ENCODE measurements at regions of chr20 and their contacts with region 1.

Region 1: DNA sequence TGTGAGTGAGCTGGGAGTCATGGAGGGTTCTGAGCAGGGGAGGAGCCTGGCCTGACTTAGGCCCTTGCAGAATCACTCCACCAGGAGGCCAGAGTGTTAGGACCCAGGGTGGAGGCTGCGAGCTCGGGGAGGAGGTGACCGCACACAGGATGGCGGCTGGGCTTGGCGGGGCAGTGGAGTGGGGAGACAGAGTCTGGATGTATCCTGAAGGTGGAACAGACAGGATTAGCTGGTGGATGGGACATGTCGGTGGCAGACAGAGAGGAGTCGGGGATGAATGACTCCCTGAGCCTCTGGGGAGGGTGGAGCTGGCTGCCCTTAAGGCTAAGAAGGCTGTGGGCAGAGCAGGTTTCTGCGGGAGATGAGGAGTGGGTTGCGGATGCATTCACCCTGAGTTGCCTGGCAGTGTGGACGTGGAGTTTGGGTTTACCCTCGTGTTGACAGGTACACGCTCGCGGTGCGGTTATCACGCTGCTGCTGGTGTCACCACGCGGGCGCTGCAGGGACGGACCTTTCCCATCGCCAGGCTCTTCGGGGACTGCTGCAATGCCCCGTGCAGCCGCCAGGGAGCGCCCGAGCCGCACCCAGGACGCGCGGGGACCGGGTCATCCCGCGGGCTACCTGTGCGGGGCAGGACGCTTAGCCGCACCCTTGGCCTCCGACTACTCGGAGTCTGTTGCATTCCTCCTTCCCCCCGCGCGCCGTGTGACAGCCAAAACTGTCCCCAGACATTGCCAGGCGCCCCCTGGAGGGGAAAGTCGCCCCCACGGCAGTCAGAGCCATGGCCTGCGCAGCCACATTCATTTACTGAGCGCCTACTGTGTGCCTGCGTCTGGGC is 43.0 kb upstream of the PTGIS start:
- DNase-seq: peak; percentile 55 to 96 (median 81)

Region 2: GRCh38 chr20:49541733-49542513 is 69.0 kb before region 1 on chr20:
- intact Hi-C with region 1: loop called (anchors 2 kb)
- DNase-seq: peak in 9 of 10 donors; percentile 23 to 92 (median 55)

Region 3: DNA sequence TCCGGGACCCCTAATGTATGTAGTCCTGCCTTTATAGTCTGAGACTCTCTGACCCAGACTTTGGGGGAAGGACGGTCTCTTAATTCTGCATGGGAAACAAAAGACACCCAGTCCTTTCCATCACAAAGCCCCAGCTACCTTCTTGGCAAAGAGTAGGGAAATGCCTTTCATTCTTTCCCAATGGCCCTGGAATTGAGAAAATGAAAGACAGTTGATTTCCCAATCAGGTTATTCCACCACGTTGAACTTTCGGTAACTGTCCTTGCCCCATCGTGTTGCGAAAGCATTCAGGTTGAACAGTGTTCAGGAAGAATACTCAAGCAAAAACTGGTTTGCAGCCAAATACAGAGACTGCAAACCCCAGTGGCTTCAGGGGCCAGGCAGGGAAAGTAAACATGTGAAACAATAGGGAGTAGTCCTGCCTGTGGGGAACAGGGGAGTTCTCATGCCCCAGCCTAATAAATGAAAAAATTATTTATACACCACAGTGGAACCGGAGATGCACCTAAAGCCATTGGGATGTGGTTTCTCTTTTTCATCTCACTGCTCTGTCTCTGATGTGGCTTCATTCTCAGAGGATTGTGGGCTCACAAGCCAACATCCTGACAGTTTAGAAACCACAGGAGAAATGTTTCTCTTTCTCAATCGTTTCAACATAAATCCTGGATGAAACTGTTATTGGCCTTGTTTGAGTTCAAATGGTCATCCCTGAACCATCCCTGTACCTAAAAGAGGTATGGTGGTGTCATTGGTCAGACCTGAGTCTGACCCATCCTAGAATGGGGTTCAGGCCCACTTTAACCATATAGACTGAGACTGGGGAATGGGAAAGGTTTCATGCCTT is 157.5 kb after region 1 on chr20:
- intact Hi-C with region 1: loop called (anchors 1 kb)
- DNase-seq: no peak

Region 4: GRCh38 chr20:49888345-49888966 is 277.5 kb after region 1 on chr20:
- intact Hi-C with region 1: loop called (anchors 1 kb)
- DNase-seq: peak; percentile 66 to 98 (median 84)

Region 5: DNA sequence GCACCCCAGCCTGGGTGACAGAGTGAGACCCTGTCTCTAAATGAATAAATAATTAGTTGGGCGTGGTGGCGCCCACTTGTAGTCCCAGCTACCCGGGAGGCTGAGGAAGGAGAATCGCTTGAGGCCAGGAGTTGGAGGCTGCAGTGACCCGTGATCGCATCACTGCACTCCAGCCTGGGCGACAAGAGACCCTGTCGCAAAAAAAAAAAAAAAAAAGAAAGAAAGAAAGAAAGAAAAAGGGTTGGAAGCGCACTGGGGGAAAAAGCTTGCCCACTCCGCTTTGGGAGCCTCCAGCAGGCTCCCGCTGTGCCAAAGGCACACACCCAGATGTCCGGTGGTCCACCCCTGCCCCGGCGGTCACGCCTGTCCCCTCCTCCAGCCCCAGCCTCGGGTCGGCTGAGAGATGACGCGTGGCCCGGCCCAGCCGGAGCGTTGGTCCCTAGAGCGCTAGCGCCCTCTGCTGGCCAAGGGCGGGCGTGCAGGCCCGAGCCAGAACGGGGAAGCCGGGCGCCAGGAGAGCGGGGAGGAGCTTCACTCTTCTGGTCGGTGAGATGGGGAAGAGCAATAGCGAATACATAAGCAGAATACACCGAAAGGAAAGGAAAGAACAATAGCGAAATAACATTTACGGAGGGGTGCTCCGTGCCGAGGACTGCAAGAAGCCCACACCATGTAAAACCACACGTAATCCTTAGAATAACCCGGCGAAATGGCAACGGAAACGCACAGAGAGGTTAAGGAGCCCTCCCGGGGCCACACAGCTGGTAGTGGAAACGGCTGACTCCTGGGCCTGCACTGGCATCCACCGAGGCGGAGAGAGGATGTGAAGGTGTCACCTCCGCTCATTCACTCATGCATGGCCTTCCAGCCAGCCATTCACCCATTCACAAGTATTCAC is 460.3 kb after region 1 on chr20:
- intact Hi-C with region 1: loop called (anchors 5 kb)
- DNase-seq: peak; percentile 79 to 98 (median 95)

Measured in posterior cingulate gyrus (tissue), 11 donors.